Ascending aorta (tissue), 2 donors: ENCODE measurements at regions of chr15 and their contacts with region 1.

Region 1: GRCh38 chr15:90994417-90995311 is at the start of gene PRC1:
- DNase-seq: peak; percentile 93 to 99
- H3K4me3 ChIP-seq: peak within 1 kb of the TSS; percentile 82 to 89
- H3K27ac ChIP-seq: peak within 1 kb of the TSS; percentile 92 to 95
- H3K4me1 ChIP-seq: peaks cover 4 to 5% of the 10 kb centered on the region in 2 donors
- H3K27me3 ChIP-seq: no peaks in the 10 kb centered on the region
- CTCF ChIP-seq: no peak
- total RNA-seq, gene PRC1: 29.1 TPM

Region 2: DNA sequence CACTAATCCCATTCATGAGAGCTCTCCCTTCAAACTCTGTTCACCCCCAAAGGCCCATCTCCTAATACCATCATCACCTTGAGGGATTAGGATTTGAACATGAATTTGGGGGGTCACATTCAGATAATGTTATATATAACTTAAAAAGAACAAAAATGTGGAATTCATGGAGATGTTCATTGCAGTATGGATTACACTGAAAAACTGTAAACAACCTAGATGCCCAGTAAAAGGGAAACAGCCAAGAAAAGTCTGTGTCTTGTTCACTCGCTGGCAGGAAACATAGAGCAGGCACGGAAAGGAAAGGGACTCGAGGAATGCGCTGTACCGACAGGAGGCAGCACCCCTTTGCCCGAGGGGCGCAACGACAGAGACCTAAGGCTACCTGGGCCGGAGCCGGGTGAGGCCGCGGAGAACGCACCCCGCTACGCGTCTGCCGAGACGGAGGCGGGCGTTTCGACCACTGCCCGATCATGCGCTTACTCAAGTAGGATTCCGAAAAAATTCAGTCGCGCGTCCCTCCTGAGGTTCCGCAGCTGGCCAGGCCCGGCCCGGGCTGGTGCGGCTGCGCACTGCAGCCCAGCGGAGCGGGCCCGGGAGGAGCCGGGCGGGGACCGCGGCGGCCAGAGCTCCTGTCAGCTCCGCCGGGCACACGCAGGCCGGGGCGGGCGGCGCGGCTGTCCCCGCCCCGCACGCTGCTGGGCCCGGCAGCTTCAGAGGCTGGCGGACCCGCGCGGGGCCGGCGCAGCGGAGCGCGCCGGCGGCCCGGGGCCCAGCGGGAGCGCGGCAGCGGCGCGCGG is 92.4 kb before region 1 on chr15:
- intact Hi-C with region 1: loop called (anchors 1 kb)
- DNase-seq: peak in 1 of 2 donors; percentile 85
- H3K4me3 ChIP-seq: peak overlapping the region; percentile 82 to 89
- H3K27ac ChIP-seq: peak overlapping the region; percentile 82 to 96
- H3K4me1 ChIP-seq: peaks cover 0 to 12% of the 10 kb centered on the region in 2 donors
- H3K27me3 ChIP-seq: no peaks in the 10 kb centered on the region
- CTCF ChIP-seq: peak; percentile 72 to 86 (median 82)

Region 3: DNA sequence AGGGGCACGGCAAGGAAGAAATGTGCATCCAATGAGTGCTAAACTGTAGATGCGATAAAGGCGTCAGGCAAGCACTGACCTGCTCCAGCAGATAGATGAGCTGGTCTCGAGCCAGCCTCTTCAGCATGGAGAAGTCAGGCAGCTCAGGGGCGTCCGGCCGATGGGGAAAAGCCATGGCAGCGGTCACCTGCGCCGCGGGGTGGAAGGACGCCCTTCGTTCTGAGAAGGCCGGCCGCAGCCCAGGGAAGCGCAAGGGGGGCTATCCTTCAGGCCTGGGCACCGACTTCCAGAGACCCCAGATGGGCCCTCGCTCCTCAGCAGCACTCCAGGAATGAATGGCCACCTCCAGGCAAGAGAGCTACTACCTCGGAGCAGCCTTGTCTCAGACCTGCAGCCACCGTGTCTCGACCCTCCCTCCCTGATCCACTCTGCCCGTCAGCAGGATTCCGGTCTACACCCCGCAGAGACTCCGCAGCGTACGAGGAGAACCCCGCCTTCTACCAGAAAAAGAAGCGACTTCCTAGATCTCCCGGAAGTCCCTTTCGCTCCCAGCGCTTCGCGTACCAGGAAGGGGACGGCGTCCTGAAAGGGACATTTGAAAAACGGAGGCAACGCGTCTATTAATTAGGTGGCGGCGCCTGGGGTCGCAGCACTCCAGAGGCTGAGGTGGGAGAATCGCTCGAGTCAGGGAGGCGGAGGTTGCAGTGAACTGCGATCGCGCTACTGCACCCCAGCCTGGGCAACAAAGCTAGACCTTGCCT is 27.6 kb after region 1 on chr15 and contains the start of gene VPS33B:
- intact Hi-C with region 1: loop called (anchors 1 kb)
- DNase-seq: peak; percentile 30 to 93
- H3K4me3 ChIP-seq: peak within 1 kb of the TSS; percentile 95 to 99
- H3K27ac ChIP-seq: peak within 1 kb of the TSS; percentile 71 to 82
- H3K4me1 ChIP-seq: peaks cover 0 to 8% of the 10 kb centered on the region in 2 donors
- H3K27me3 ChIP-seq: no peaks in the 10 kb centered on the region
- CTCF ChIP-seq: no peak
- total RNA-seq, gene VPS33B: 0.53 TPM